Colonic mucosa (tissue), 4 donors: ENCODE measurements at regions of chr20 and their contacts with region 1.

Region 1: DNA sequence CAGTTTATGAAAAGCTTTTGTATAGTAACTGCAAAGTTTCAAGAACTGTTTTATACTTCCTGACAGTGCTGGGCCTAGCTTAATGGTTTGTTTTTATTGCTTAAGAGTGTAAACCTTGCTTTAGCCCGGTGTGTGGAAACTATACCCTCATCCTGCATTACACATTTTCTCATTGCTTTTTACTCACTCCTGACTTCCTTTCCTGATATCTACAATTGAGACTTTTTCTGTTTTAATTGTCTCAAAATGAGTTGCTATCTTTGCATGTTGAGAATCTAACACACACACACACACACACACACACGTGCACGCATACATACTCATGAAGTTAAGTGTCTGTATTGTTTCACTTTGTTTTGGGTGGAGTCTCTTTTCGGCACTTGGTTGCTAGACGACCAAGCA is 16.7 kb downstream of the BMP2 start:
- DNase-seq: peak; percentile 36
- H3K4me3 ChIP-seq: no peak overlapping the region
- H3K27ac ChIP-seq: no peak overlapping the region
- H3K4me1 ChIP-seq: peaks cover 6% of the 10 kb centered on the region
- H3K27me3 ChIP-seq: no peaks in the 10 kb centered on the region
- CTCF ChIP-seq: no peak

Region 2: GRCh38 chr20:5996765-5997164 is 787.4 kb before region 1 on chr20:
- intact Hi-C with region 1: no loop called
- DNase-seq: no peak
- H3K4me3 ChIP-seq: no peak overlapping the region
- H3K27ac ChIP-seq: no peak overlapping the region
- H3K4me1 ChIP-seq: no peaks in the 10 kb centered on the region
- H3K27me3 ChIP-seq: no peaks in the 10 kb centered on the region
- CTCF ChIP-seq: no peak

Region 3: GRCh38 chr20:6819605-6820004 is 35.4 kb after region 1 on chr20:
- intact Hi-C with region 1: loop called (anchors 5 kb)
- DNase-seq: peak; percentile 29
- H3K4me3 ChIP-seq: no peak overlapping the region
- H3K27ac ChIP-seq: no peak overlapping the region
- H3K4me1 ChIP-seq: no peaks in the 10 kb centered on the region
- H3K27me3 ChIP-seq: no peaks in the 10 kb centered on the region
- CTCF ChIP-seq: peak; percentile 40

Region 4: DNA sequence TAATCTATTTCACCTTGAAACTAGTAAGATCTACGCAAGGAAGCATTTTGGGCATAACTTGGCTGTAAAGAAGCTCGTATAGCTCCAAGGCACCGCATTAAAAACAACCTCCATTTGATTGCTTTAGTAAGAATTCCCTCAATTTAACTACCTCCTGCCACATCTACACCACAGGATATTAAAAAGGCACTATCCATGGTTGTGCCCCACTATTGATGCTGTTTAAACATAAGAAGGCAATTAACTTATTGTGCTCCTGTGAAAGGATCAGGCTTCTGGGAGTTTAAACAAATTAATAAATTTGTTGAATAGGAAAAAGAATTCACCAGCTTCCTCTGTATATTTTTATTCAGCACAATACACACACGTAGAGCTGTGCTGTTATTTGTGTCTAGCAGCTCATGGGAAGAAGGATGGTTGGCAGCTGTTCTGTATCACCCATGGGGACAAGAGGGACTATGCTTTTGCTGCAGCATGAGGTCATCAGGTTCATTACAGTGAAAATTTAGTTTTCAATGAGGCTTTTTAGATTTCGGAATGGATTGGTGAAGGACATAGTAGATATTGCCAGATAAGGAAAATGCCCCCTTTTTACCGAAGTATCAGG is 642.8 kb after region 1 on chr20:
- intact Hi-C with region 1: no loop called
- DNase-seq: no peak
- H3K4me3 ChIP-seq: no peak overlapping the region
- H3K27ac ChIP-seq: no peak overlapping the region
- H3K4me1 ChIP-seq: no peaks in the 10 kb centered on the region
- H3K27me3 ChIP-seq: no peaks in the 10 kb centered on the region
- CTCF ChIP-seq: no peak